ENCODE measurements at regions of chr12 and their contacts with region 1.

Region 1: GRCh38 chr12:110600254-110600653 is 13.7 kb upstream of the TCTN1 start:
- DNase-seq: peak; percentile 59
- H3K4me3 ChIP-seq: no peak overlapping the region
- H3K27ac ChIP-seq: no peak overlapping the region
- H3K4me1 ChIP-seq: no peaks in the 10 kb centered on the region
- H3K27me3 ChIP-seq: no peaks in the 10 kb centered on the region
- CTCF ChIP-seq: peak; percentile 10 to 15
- POLR2A ChIP-seq: no peak

Region 2: DNA sequence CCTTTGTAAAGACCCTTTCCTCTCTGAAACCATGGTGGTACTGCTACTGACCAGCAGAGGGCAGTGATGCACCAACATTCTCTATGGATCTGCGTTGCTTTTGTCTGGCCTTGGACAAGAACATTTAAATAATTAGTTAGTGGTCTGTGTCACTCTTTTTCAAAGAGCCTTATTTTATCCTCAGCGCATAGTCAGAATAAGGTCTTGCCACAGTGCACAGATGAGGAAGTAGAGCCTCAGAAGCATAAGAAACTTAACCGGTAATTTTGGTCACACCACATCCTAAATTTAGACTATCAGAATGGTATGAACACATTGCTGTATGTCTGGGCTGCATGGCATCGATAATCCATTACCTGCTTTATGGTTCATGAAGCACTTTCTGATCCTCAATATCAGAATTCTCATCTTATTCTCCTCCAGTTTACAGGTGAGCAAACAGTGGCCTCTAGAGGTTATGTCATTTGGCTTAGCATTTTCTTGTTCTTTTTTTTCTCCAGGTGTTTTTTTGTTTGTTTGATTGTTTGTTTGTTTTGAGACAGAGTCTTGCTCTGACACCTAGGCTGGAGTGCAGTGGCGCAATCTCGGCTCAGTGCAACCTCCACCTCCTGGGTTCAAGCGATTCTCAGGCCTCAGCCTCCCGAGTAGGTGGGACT is 499.8 kb before region 1 on chr12:
- CTCF ChIA-PET with region 1: interaction called, 4 read pairs
- POLR2A ChIA-PET with region 1: no interaction called
- dilution Hi-C with region 1: no loop called
- intact Hi-C with region 1: loop called (anchors 1 kb)
- DNase-seq: peak; percentile 85
- H3K4me3 ChIP-seq: no peak overlapping the region
- H3K27ac ChIP-seq: no peak overlapping the region
- H3K4me1 ChIP-seq: no peaks in the 10 kb centered on the region
- H3K27me3 ChIP-seq: no peaks in the 10 kb centered on the region
- CTCF ChIP-seq: peak; percentile 81 to 89
- POLR2A ChIP-seq: no peak

Region 3: GRCh38 chr12:110449799-110450497 is 150.3 kb before region 1 on chr12 and contains the start of gene ARPC3:
- CTCF ChIA-PET with region 1: interaction called, 101 read pairs
- POLR2A ChIA-PET with region 1: no interaction called
- dilution Hi-C with region 1: no loop called
- intact Hi-C with region 1: loop called (anchors 1 kb)
- DNase-seq: peak; percentile 92
- H3K4me3 ChIP-seq: peak within 1 kb of the TSS; percentile 59 to 85 (median 83)
- H3K27ac ChIP-seq: peak within 1 kb of the TSS; percentile 89
- H3K4me1 ChIP-seq: peaks cover 5% of the 10 kb centered on the region
- H3K27me3 ChIP-seq: no peaks in the 10 kb centered on the region
- CTCF ChIP-seq: peak; percentile 87 to 89
- POLR2A ChIP-seq: peak; percentile 86
- total RNA-seq, gene ARPC3: 304 and 308 TPM in 2 replicates

Region 4: GRCh38 chr12:110508071-110508586 is 92.1 kb before region 1 on chr12:
- CTCF ChIA-PET with region 1: interaction called, 117 read pairs
- POLR2A ChIA-PET with region 1: no interaction called
- dilution Hi-C with region 1: no loop called
- intact Hi-C with region 1: loop called (anchors 1 kb)
- DNase-seq: no peak
- H3K4me3 ChIP-seq: no peak overlapping the region
- H3K27ac ChIP-seq: no peak overlapping the region
- H3K4me1 ChIP-seq: no peaks in the 10 kb centered on the region
- H3K27me3 ChIP-seq: no peaks in the 10 kb centered on the region
- CTCF ChIP-seq: no peak
- POLR2A ChIP-seq: no peak

Region 5: GRCh38 chr12:110543252-110543959 is 56.8 kb before region 1 on chr12:
- CTCF ChIA-PET with region 1: interaction called, 88 read pairs
- POLR2A ChIA-PET with region 1: no interaction called
- dilution Hi-C with region 1: no loop called
- intact Hi-C with region 1: no loop called
- DNase-seq: peak; percentile 88
- H3K4me3 ChIP-seq: no peak overlapping the region
- H3K27ac ChIP-seq: peak overlapping the region; percentile 25
- H3K4me1 ChIP-seq: peaks cover 61% of the 10 kb centered on the region
- H3K27me3 ChIP-seq: no peaks in the 10 kb centered on the region
- CTCF ChIP-seq: no peak
- POLR2A ChIP-seq: peak; percentile 22

Region 6: DNA sequence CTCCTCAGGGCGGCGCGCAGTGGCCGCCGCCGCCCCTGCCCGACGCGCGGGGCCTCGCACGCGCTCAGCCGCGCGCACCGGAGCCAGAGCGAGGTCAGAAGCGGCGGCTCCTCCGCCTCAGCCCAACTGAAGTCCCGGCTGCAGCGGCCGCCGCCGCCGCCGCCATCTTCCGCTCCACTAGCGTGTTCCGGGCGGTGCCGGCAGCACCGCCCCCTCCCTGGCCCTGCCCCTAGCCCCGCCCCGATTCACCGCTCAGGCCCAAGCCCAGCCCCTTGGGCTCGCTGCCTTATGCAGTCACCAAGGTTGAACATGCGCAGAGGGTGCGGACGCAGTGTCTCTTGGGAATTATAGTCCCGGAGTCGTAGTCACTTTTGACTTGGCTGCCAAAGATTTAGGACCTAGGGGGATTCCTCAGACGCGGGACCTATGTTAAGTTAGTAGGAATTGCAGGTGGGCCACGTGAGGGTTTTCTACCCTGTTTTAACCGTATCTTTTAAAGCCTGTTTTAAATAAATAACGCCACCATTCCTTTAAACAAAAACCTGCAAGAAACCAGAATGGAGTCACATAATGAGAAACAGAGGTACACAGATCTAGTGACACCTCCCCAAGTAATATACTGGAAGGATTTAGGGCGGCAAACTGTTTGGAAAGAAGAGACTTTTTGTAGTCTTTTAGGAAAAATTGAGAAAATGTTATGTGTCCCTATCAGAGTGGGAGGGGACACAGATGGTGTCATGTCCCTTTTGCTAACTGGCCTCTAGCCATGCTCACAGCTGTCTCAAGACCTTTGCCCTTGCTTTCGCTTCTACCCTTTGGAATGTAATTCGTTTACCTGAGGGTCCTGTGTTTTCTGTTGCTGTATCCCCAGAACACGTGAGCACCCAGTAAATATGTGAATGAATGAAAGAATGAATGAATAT is 16.9 kb before region 1 on chr12 and contains the start of gene PPTC7:
- CTCF ChIA-PET with region 1: interaction called, 27 read pairs
- POLR2A ChIA-PET with region 1: no interaction called
- dilution Hi-C with region 1: no loop called
- intact Hi-C with region 1: no loop called
- DNase-seq: peak; percentile 95
- H3K4me3 ChIP-seq: peak within 1 kb of the TSS; percentile 77 to 91 (median 84)
- H3K27ac ChIP-seq: peak within 1 kb of the TSS; percentile 30
- H3K4me1 ChIP-seq: peaks cover 29% of the 10 kb centered on the region
- H3K27me3 ChIP-seq: no peaks in the 10 kb centered on the region
- CTCF ChIP-seq: no peak
- POLR2A ChIP-seq: peak; percentile 90
- total RNA-seq, gene PPTC7: 15.2 and 17.0 TPM in 2 replicates

Region 7: DNA sequence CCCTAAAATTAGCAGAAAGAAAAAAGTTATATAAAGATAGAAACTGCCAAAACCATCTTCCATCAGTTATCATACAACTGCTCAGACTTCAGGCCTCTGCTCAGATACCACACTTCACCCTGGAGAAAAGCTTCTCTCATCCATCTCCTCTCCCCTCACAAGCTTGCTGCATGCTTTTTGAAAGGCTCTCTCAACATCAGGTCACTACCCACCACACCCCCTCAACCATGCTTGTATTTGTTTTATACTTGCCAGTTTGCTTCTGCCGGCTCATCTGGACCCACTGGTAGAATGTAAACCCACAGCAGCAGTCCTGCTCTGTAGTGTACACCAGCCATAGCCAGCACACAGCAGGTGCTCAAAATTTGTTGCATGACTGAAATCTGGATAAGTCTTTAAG is 133.6 kb after region 1 on chr12:
- CTCF ChIA-PET with region 1: no interaction called
- POLR2A ChIA-PET with region 1: no interaction called
- dilution Hi-C with region 1: no loop called
- intact Hi-C with region 1: no loop called
- DNase-seq: no peak
- H3K4me3 ChIP-seq: no peak overlapping the region
- H3K27ac ChIP-seq: no peak overlapping the region
- H3K4me1 ChIP-seq: peaks cover 15% of the 10 kb centered on the region
- H3K27me3 ChIP-seq: no peaks in the 10 kb centered on the region
- CTCF ChIP-seq: no peak
- POLR2A ChIP-seq: no peak

Region 8: GRCh38 chr12:110826592-110827200 is 226.4 kb after region 1 on chr12:
- CTCF ChIA-PET with region 1: interaction called, 11 read pairs
- POLR2A ChIA-PET with region 1: no interaction called
- dilution Hi-C with region 1: no loop called
- intact Hi-C with region 1: loop called (anchors 1 kb)
- DNase-seq: peak; percentile 74
- H3K4me3 ChIP-seq: no peak overlapping the region
- H3K27ac ChIP-seq: no peak overlapping the region
- H3K4me1 ChIP-seq: no peaks in the 10 kb centered on the region
- H3K27me3 ChIP-seq: no peaks in the 10 kb centered on the region
- CTCF ChIP-seq: peak; percentile 74 to 77
- POLR2A ChIP-seq: no peak

Measured in endothelial cell of umbilical vein (primary cell).